CD4-positive, alpha-beta T cell (primary cell): ENCODE measurements at regions of chr10 and their contacts with region 1.

Region 1: GRCh38 chr10:97498076-97498840 is at the start of gene MMS19:
- DNase-seq: peak; percentile 98 to 100 (median 99)
- ATAC-seq: peak; percentile 72
- H3K4me3 ChIP-seq: peak within 1 kb of the TSS; percentile 91
- H3K4me3 Mint-ChIP-seq: peak within 1 kb of the TSS; percentile 99
- H3K27ac ChIP-seq: peak within 1 kb of the TSS; percentile 75 to 83
- H3K27ac Mint-ChIP-seq: peak within 1 kb of the TSS; percentile 91
- H3K4me1 ChIP-seq: peaks cover 42% of the 10 kb centered on the region
- H3K4me1 Mint-ChIP-seq: peaks cover 52% of the 10 kb centered on the region
- H3K27me3 ChIP-seq: peaks cover 0 to 2% of the 10 kb centered on the region in 2 experiments
- H3K27me3 Mint-ChIP-seq: peaks cover 15% of the 10 kb centered on the region
- CTCF ChIP-seq: no peak
- total RNA-seq, gene MMS19: 58.4 to 65.7 TPM

Region 2: GRCh38 chr10:97292097-97292862 is 206.0 kb before region 1 on chr10 and contains the start of gene ARHGAP19:
- CTCF ChIA-PET with region 1: no interaction called
- POLR2A ChIA-PET with region 1: no interaction called
- intact Hi-C with region 1: loop called in 1 of 2 experiments (anchors 2 kb)
- DNase-seq: peak; percentile 86 to 97 (median 90)
- ATAC-seq: peak; percentile 99
- H3K4me3 ChIP-seq: peak within 1 kb of the TSS; percentile 72
- H3K4me3 Mint-ChIP-seq: peak within 1 kb of the TSS; percentile 95
- H3K27ac ChIP-seq: peak within 1 kb of the TSS; percentile 49 to 65
- H3K27ac Mint-ChIP-seq: peak within 1 kb of the TSS; percentile 50
- H3K4me1 ChIP-seq: peaks cover 13% of the 10 kb centered on the region
- H3K4me1 Mint-ChIP-seq: peaks cover 18% of the 10 kb centered on the region
- H3K27me3 ChIP-seq: no peaks in the 10 kb centered on the region
- H3K27me3 Mint-ChIP-seq: no peaks in the 10 kb centered on the region
- CTCF ChIP-seq: no peak
- total RNA-seq, gene ARHGAP19: 6.9 to 8.8 TPM

Region 3: GRCh38 chr10:97376413-97376812 is 121.8 kb before region 1 on chr10:
- CTCF ChIA-PET with region 1: no interaction called
- POLR2A ChIA-PET with region 1: no interaction called
- intact Hi-C with region 1: no loop called
- DNase-seq: peak in 2 of 14 experiments; percentile 8 to 30
- ATAC-seq: no peak
- H3K4me3 ChIP-seq: no peak overlapping the region
- H3K4me3 Mint-ChIP-seq: no peak overlapping the region
- H3K27ac ChIP-seq: no peak overlapping the region
- H3K27ac Mint-ChIP-seq: no peak overlapping the region
- H3K4me1 ChIP-seq: no peaks in the 10 kb centered on the region
- H3K4me1 Mint-ChIP-seq: no peaks in the 10 kb centered on the region
- H3K27me3 ChIP-seq: no peaks in the 10 kb centered on the region
- H3K27me3 Mint-ChIP-seq: no peaks in the 10 kb centered on the region
- CTCF ChIP-seq: no peak

Region 4: GRCh38 chr10:97425964-97426775 is 72.1 kb before region 1 on chr10 and contains the start of gene PGAM1:
- CTCF ChIA-PET with region 1: no interaction called
- POLR2A ChIA-PET with region 1: no interaction called
- intact Hi-C with region 1: loop called (anchors 1 to 5 kb)
- DNase-seq: peak; percentile 90 to 99 (median 94)
- ATAC-seq: peak; percentile 82
- H3K4me3 ChIP-seq: peak within 1 kb of the TSS; percentile 78
- H3K4me3 Mint-ChIP-seq: peak within 1 kb of the TSS; percentile 95
- H3K27ac ChIP-seq: peak within 1 kb of the TSS; percentile 75 to 85
- H3K27ac Mint-ChIP-seq: peak within 1 kb of the TSS; percentile 89
- H3K4me1 ChIP-seq: peaks cover 43% of the 10 kb centered on the region
- H3K4me1 Mint-ChIP-seq: peaks cover 46% of the 10 kb centered on the region
- H3K27me3 ChIP-seq: no peaks in the 10 kb centered on the region
- H3K27me3 Mint-ChIP-seq: no peaks in the 10 kb centered on the region
- CTCF ChIP-seq: peak; percentile 64
- total RNA-seq, gene PGAM1: 50.7 to 55.5 TPM

Region 5: GRCh38 chr10:97553575-97554031 is 55.3 kb after region 1 on chr10:
- CTCF ChIA-PET with region 1: no interaction called
- POLR2A ChIA-PET with region 1: interaction called, 4 read pairs
- intact Hi-C with region 1: loop called in 1 of 2 experiments (anchors 2 kb)
- DNase-seq: peak; percentile 30 to 75 (median 54)
- ATAC-seq: peak; percentile 94
- H3K4me3 ChIP-seq: no peak overlapping the region
- H3K4me3 Mint-ChIP-seq: no peak overlapping the region
- H3K27ac ChIP-seq: no peak overlapping the region
- H3K27ac Mint-ChIP-seq: no peak overlapping the region
- H3K4me1 ChIP-seq: peaks cover 4% of the 10 kb centered on the region
- H3K4me1 Mint-ChIP-seq: no peaks in the 10 kb centered on the region
- H3K27me3 ChIP-seq: no peaks in the 10 kb centered on the region
- H3K27me3 Mint-ChIP-seq: no peaks in the 10 kb centered on the region
- CTCF ChIP-seq: peak; percentile 83

Region 6: DNA sequence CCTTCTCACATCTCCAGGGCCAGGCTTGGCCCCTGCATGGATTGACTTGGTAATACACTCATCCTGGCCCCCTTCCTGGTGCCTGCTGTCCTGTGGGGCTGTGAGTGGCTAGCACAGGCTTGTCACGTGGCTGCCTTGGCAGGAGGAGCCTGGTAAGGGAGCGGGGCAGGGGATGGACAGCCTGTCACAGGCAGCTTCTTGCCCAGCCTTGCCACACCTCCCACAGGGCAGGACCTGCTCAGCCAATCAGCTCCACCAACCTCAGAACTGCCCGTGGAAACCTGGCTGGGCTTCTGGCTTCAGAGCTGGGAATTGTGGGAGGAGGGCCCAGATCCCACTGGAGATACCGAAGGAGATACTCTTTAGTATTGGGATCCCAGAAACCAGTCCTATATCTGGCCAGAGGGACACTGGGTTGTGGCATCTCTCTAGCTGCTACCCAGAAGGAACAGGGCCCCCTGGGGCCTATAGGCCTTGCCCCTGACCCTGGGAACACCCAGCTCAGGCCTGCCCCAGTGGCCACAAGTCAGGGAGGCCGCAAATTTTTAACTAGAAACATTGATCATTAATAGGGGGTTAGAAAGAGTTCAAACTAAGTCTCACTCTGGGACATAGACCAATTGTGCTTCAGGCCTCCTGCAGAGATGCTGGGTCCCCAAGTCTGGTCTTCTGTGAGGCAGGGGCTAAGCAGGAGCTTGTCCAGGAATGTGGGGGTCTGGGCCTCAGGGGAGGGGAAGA is 86.0 kb after region 1 on chr10 and contains the start of gene HOGA1:
- CTCF ChIA-PET with region 1: no interaction called
- POLR2A ChIA-PET with region 1: no interaction called
- intact Hi-C with region 1: no loop called
- DNase-seq: no peak
- ATAC-seq: no peak
- H3K4me3 ChIP-seq: no peak within 1 kb of the TSS
- H3K4me3 Mint-ChIP-seq: no peak within 1 kb of the TSS
- H3K27ac ChIP-seq: no peak within 1 kb of the TSS
- H3K27ac Mint-ChIP-seq: no peak within 1 kb of the TSS
- H3K4me1 ChIP-seq: no peaks in the 10 kb centered on the region
- H3K4me1 Mint-ChIP-seq: no peaks in the 10 kb centered on the region
- H3K27me3 ChIP-seq: no peaks in the 10 kb centered on the region
- H3K27me3 Mint-ChIP-seq: no peaks in the 10 kb centered on the region
- CTCF ChIP-seq: no peak
- total RNA-seq, gene HOGA1: not detected

Region 7: DNA sequence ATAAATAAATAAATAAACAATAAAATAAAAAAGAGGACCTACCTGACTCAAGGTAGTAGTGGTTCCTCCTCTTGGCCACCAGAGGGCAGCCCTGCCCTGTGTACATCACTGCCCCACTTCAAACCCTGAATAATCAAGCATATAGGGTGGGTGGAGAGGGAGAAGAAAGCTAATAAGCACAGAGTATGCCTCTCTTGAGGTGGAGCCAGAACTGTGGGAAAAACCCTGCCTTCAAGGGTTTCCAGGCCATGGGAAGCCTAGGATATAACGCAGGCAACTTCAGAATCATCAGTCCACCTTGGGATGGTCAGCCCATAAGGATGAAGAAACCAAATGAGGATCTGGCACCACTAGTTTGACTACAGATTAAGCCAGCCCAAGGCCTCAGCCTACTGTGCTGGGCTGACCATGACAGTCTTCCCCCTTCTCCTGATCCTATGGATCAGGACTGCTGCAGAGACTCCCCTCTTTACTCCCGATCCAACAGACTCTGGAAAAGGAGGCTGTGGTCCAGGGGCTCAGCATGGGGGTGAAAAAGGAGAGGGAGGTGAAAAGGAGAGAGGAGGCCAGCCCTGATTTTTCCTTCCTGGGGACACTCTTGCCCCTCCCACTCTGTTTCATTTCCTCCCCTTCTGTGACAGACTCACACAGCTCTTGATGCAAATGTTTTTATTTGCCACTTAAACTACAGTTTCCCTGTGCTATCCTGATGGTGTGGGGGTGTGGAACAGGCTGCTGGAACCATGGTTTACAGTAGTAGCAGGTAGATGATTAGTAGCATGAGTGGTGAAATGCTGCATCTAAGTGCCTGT is 178.7 kb after region 1 on chr10:
- CTCF ChIA-PET with region 1: no interaction called
- POLR2A ChIA-PET with region 1: no interaction called
- intact Hi-C with region 1: no loop called
- DNase-seq: peak; percentile 19 to 82 (median 44)
- ATAC-seq: peak; percentile 94
- H3K4me3 ChIP-seq: no peak overlapping the region
- H3K4me3 Mint-ChIP-seq: no peak overlapping the region
- H3K27ac ChIP-seq: no peak overlapping the region
- H3K27ac Mint-ChIP-seq: no peak overlapping the region
- H3K4me1 ChIP-seq: peaks cover 5% of the 10 kb centered on the region
- H3K4me1 Mint-ChIP-seq: no peaks in the 10 kb centered on the region
- H3K27me3 ChIP-seq: no peaks in the 10 kb centered on the region
- H3K27me3 Mint-ChIP-seq: no peaks in the 10 kb centered on the region
- CTCF ChIP-seq: peak; percentile 91

Region 8: DNA sequence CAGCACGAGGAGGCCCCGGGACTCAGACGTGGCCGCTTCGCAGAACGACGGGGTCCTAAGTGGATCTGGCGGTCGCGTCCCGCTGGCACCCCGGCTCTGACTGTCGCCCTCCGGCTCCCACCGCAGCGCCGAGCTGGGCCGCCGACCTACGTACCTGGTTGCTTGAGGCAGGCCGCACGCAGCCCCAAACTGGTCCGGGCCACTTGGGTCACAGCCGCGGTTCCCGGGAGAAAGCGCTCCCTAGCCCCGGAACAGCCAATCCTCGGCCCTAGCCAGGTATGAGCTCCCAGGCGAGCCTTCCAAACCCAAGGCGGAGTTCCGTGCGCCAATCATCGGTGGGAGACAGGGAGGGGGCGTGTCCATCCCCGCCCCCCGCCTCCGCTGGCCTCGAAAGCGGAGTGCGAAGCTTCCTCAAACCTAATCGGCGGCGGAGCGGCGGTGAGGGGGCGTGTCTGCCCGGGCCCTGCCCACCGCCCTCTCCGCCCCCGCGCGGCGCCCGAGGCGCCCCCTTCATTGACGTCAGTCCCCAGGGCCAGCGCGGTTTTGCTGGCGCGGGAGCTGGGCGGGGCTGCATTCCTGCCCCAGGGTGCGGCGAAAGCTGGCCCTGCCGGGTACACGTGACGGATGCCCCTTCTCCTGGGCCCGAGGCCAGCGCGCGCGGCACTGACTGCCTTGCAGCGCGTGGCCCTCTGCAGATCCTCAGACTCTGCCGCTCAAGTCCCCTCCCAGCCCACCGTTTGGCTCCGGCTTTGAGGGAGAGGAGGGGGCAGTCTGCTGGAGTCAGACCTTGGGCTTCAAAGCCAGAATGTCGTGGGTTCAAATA is 188.9 kb after region 1 on chr10 and contains the start of gene AVPI1:
- CTCF ChIA-PET with region 1: no interaction called
- POLR2A ChIA-PET with region 1: interaction called, 3 read pairs
- intact Hi-C with region 1: loop called in 1 of 2 experiments (anchors 5 kb)
- DNase-seq: peak; percentile 90 to 98 (median 94)
- ATAC-seq: peak; percentile 91
- H3K4me3 ChIP-seq: peak within 1 kb of the TSS; percentile 82
- H3K4me3 Mint-ChIP-seq: peak within 1 kb of the TSS; percentile 90
- H3K27ac ChIP-seq: peak within 1 kb of the TSS; percentile 52 to 62
- H3K27ac Mint-ChIP-seq: peak within 1 kb of the TSS; percentile 75
- H3K4me1 ChIP-seq: peaks cover 35% of the 10 kb centered on the region
- H3K4me1 Mint-ChIP-seq: peaks cover 16% of the 10 kb centered on the region
- H3K27me3 ChIP-seq: no peaks in the 10 kb centered on the region
- H3K27me3 Mint-ChIP-seq: no peaks in the 10 kb centered on the region
- CTCF ChIP-seq: no peak
- total RNA-seq, gene AVPI1: 10.7 to 11.6 TPM